ENCODE measurements at regions of chr12 and their contacts with region 1.

Region 1: DNA sequence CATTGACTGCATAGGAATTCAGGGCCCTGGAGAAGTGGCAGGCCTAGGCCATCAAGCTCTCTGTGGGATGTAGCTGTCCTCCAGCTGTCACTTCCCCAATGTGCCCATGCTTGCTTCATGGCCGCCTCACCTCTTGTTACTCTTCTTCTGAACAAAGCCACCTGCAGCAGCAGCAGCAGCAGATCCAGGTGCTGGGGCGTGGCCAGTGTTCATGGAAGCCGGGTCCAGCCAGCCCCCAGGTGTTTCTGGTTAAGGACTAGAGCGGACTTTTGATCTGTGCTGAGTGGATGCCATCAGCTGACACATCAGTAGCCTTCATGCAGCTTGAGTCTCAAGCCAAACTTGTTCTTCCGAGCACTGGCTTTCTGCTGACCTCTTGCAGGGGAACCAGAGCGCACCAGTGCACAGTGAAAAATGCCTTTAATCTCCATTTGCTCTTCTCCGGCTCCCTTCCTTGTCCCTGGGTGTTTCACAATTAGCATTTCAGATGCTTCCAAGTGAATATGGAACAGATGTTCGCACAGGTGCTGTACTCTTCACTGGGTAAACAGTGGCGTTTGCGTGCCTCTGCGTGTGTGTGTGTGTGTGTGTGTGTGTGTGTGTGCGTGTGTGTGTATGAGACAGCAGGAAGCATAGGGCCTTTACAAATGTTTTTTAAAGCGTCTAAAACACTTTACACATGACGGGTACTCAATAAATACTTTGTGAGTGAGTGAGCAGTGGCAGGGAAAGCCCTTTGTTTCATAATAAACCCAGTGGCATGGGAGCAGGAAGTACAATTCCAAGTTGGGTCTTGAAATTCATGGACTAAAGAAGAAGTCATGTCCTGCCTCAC is 20.1 kb downstream of the TPCN1 start:
- DNase-seq: peak; percentile 98
- H3K4me3 ChIP-seq: peak overlapping the region in 1 of 3 experiments; percentile 13
- H3K27ac ChIP-seq: peak overlapping the region; percentile 92
- H3K4me1 ChIP-seq: peaks cover 72% of the 10 kb centered on the region
- H3K27me3 ChIP-seq: no peaks in the 10 kb centered on the region
- CTCF ChIP-seq: no peak

Region 2: DNA sequence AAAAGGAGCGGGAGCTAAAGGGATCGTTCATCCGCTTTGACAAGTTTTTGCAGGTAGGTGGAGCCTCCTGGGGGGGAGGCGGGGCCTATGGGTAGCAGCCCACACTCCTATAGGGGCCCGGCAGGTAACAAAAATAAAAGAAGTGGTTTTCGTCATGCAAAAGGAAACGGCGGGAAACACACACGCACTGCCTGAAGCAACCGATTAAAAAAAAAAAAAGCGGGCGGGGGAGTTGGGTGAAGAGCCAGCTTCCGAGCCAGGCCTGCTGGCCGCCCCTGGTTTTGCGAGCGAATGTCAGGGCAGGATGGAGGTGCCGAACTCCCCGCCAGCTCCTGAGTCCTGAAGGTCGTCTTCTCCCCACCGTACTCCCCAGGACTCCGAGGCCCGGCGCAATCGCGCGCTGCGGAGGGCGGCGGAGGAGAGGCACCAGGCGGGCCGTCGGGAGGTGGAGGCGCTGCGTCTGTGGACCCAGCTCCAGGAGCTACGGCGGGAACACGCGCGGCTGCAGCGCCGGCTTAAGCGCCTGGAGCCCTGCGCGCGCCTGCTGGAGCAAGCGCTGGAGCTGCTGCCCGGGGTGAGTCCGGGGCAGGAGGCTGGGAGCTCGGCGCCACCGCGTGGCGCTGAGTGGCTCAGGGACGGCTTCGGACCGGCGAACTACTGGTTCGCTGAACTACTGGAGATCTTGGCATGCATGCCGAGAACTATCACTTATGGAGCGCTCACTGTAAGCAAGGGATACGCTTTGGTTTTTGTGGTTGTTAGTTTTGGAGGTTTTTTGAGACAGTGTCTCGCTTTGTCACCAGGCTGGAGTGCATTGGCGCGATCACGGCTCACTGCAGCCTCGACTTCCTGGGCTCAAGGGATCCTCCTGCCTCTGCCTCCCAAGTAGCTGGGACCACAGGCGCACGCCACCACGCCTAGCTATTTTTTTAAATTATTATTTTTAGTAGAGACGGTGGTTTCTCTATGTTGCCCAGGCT is 88.3 kb before region 1 on chr12:
- CTCF ChIA-PET with region 1: no interaction called
- dilution Hi-C with region 1: loop called (anchors 5 kb)
- in situ Hi-C with region 1: no loop called
- intact Hi-C with region 1: no loop called
- DNase-seq: peak; percentile 79
- H3K4me3 ChIP-seq: peak overlapping the region; percentile 46 to 60 (median 46)
- H3K27ac ChIP-seq: no peak overlapping the region
- H3K4me1 ChIP-seq: peaks cover 25% of the 10 kb centered on the region
- H3K27me3 ChIP-seq: no peaks in the 10 kb centered on the region
- CTCF ChIP-seq: peak; percentile 3 to 69

Region 3: GRCh38 chr12:113184900-113185773 is 56.3 kb before region 1 on chr12 and contains the starts of genes DDX54 and RITA1:
- CTCF ChIA-PET with region 1: no interaction called
- dilution Hi-C with region 1: no loop called
- in situ Hi-C with region 1: no loop called
- intact Hi-C with region 1: loop called (anchors 2 kb)
- DNase-seq: peak; percentile 89
- H3K4me3 ChIP-seq: peak within 1 kb of the TSS; percentile 74 to 94 (median 93)
- H3K27ac ChIP-seq: peak within 1 kb of the TSS; percentile 91
- H3K4me1 ChIP-seq: peaks cover 12% of the 10 kb centered on the region
- H3K27me3 ChIP-seq: no peaks in the 10 kb centered on the region
- CTCF ChIP-seq: no peak
- total RNA-seq, gene DDX54: 49.3 to 92.9 TPM
- total RNA-seq, gene RITA1: 21.0 to 21.5 TPM

Region 4: GRCh38 chr12:113221181-113221997 is 20.0 kb before region 1 on chr12 and contains the start of gene TPCN1:
- CTCF ChIA-PET with region 1: no interaction called
- dilution Hi-C with region 1: no loop called
- in situ Hi-C with region 1: no loop called
- intact Hi-C with region 1: loop called (anchors 1 kb)
- DNase-seq: peak; percentile 100
- H3K4me3 ChIP-seq: peak within 1 kb of the TSS; percentile 61 to 85 (median 83)
- H3K27ac ChIP-seq: peak within 1 kb of the TSS; percentile 76
- H3K4me1 ChIP-seq: peaks cover 16% of the 10 kb centered on the region
- H3K27me3 ChIP-seq: no peaks in the 10 kb centered on the region
- CTCF ChIP-seq: no peak
- total RNA-seq, gene TPCN1: 10.7 to 62.3 TPM

Region 5: GRCh38 chr12:113285679-113286610 is 44.5 kb after region 1 on chr12:
- CTCF ChIA-PET with region 1: no interaction called
- dilution Hi-C with region 1: loop called (anchors 5 kb)
- in situ Hi-C with region 1: no loop called
- intact Hi-C with region 1: no loop called
- DNase-seq: no peak
- H3K4me3 ChIP-seq: no peak overlapping the region
- H3K27ac ChIP-seq: no peak overlapping the region
- H3K4me1 ChIP-seq: no peaks in the 10 kb centered on the region
- H3K27me3 ChIP-seq: no peaks in the 10 kb centered on the region
- CTCF ChIP-seq: no peak

Region 6: GRCh38 chr12:113334786-113335540 is 93.6 kb after region 1 on chr12 and contains the start of gene SLC8B1:
- CTCF ChIA-PET with region 1: no interaction called
- dilution Hi-C with region 1: loop called (anchors 5 kb)
- in situ Hi-C with region 1: no loop called
- intact Hi-C with region 1: no loop called
- DNase-seq: peak; percentile 78
- H3K4me3 ChIP-seq: peak within 1 kb of the TSS; percentile 70 to 85 (median 80)
- H3K27ac ChIP-seq: peak within 1 kb of the TSS; percentile 45
- H3K4me1 ChIP-seq: peaks cover 10% of the 10 kb centered on the region
- H3K27me3 ChIP-seq: no peaks in the 10 kb centered on the region
- CTCF ChIP-seq: no peak
- total RNA-seq, gene SLC8B1: 11.7 to 16.1 TPM

Measured in mammary epithelial cell (primary cell).